Mammary epithelial cell (primary cell): ENCODE measurements at regions of chr16 and their contacts with region 1.

Region 1: DNA sequence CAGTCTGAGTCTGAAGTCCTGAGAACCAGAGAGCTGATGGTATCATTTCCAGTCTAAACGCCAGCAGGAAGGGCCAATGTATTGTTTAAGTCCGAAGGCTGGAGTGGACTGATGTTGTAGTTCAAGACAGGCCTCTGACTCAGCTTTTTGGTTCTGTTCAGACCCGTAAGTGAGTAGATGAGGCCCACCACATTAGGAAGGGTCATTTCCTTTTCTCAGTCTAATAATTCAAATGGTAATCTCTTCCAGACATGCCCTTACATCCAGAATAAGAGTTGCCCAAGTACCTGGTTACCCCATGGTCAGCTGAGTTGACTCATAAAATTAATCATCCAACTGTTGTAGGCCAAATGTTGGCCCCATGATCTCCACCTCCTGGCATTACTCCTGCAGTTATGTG is 442.6 kb upstream of the HSBP1 start:
- DNase-seq: peak; percentile 88
- H3K4me3 ChIP-seq: no peak overlapping the region
- H3K27ac ChIP-seq: no peak overlapping the region
- H3K4me1 ChIP-seq: peaks cover 11% of the 10 kb centered on the region
- H3K27me3 ChIP-seq: no peaks in the 10 kb centered on the region
- CTCF ChIP-seq: no peak

Region 2: GRCh38 chr16:83402967-83403366 is 37.8 kb after region 1 on chr16:
- CTCF ChIA-PET with region 1: no interaction called
- dilution Hi-C with region 1: no loop called
- in situ Hi-C with region 1: no loop called
- intact Hi-C with region 1: loop called (anchors 1 kb)
- DNase-seq: peak; percentile 16
- H3K4me3 ChIP-seq: no peak overlapping the region
- H3K27ac ChIP-seq: peak overlapping the region; percentile 70
- H3K4me1 ChIP-seq: peaks cover 26% of the 10 kb centered on the region
- H3K27me3 ChIP-seq: no peaks in the 10 kb centered on the region
- CTCF ChIP-seq: no peak

Region 3: DNA sequence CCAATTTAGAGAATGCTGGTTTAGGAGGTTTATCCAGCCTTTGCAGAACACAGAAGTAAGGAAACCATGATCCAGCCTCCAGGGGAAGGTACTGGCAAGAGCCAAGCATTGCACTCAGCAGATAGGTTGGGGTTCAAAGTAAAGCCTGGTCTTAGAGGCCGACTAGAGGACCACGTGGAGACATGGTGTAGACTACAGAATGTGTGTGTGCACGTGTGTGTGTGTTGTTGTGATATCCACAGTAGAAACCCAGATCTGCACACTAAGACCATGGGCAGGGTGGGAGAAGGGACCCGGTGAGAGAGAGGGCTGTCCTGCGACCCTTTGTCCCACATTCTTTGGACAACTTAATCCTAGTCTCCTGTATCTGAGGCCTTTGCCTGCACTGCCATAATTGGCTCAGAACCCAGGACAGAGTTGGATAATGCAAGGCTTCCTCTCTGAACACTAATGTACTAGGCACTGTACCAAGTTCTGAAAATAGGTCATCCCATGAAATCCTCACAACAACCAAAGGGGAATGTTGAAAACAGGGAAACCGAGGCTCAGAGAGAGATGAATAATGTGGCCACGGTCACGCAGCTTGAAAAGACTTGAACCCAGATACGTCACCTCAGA is 117.5 kb after region 1 on chr16:
- CTCF ChIA-PET with region 1: no interaction called
- dilution Hi-C with region 1: no loop called
- in situ Hi-C with region 1: no loop called
- intact Hi-C with region 1: no loop called
- DNase-seq: no peak
- H3K4me3 ChIP-seq: no peak overlapping the region
- H3K27ac ChIP-seq: no peak overlapping the region
- H3K4me1 ChIP-seq: no peaks in the 10 kb centered on the region
- H3K27me3 ChIP-seq: no peaks in the 10 kb centered on the region
- CTCF ChIP-seq: no peak